Activated T-helper 2 cell treated with anti-CD3 and anti-CD28 coated beads, Interferon-gamma antibody, Interleukin-2, Interleukin-4, amounts not matched to agents 10 μg/mL and 5 μg/mL and 100 μg/mL, durations not matched to agents 14 hours and 24 hours and 36 hours (primary cell): ENCODE measurements at regions of chr2 and their contacts with region 1.

Region 1: DNA sequence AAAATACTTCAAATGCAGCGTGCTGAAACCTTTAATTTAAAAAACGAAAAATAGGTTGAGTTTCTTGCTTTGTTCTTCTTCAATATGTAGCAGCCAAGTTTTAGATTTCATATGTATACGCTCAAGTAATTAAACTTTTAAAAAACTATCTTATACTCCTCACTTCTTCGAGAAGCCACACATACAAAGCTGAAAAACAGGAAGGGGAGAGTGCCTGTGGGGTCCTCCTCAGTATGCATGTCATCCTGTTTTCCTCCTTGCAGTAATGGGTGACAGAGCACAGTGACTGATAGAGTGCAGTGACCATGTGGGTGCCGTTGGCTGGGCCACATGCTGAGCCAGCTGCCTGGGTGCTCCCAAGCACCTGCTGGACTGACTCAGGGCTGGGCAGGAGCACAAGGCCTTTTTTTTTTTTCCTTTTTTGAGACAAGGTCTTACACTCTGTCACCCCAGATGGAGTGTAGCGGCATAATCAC is 33.3 kb downstream of the UXS1 start:
- DNase-seq: peak; percentile 24
- H3K4me3 Mint-ChIP-seq: peak overlapping the region; percentile 81
- H3K27ac Mint-ChIP-seq: peak overlapping the region; percentile 92
- H3K4me1 Mint-ChIP-seq: peaks cover 64% of the 10 kb centered on the region
- H3K27me3 Mint-ChIP-seq: no peaks in the 10 kb centered on the region

Region 2: GRCh38 chr2:106124905-106125405 is 35.9 kb before region 1 on chr2:
- intact Hi-C with region 1: loop called (anchors 5 kb)
- DNase-seq: no peak
- H3K4me3 Mint-ChIP-seq: no peak overlapping the region
- H3K27ac Mint-ChIP-seq: no peak overlapping the region
- H3K4me1 Mint-ChIP-seq: peaks cover 25% of the 10 kb centered on the region
- H3K27me3 Mint-ChIP-seq: no peaks in the 10 kb centered on the region

Region 3: DNA sequence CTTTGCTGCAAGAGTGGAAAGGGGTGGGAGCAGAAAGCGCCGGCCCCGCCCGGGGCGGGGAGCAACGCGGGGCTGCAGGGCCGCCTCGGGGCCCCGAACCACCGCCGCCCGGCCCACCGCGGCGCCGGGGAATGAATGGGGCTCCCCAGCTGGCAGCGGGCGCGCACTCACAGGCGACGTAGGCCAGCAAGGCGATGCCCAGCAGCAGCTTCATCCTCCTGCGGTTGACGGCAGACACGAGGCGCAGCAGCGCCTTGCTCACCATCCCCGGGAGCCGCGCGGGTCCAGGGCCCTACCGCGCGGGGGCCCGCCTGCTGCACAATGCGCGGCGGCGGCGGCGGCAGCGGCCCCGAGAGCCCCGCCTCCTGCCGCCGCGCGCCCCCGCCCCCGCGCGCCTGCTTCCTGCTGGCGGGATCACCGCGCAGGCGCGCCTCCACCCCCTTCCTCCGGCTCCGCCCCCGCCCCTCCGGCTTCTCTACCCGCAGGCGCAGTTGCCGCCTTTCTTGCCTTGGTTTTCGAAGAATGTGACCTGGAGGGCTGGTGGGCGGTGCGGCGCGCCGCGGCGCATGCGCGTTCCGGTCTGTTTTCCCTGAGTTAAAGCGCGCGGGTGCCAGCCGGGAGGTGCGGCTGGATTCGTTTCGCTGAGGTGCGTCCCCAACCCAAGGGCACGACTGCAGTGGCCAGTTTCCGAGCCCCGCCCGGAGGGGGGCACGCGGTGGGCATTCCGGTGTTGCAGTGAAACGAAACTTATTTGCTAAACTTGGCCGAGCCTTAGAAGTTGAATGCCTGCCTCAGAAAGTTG is 33.4 kb after region 1 on chr2 and contains the start of gene UXS1:
- intact Hi-C with region 1: loop called (anchors 1 kb)
- DNase-seq: peak; percentile 97
- H3K4me3 Mint-ChIP-seq: peak within 1 kb of the TSS; percentile 85
- H3K27ac Mint-ChIP-seq: peak within 1 kb of the TSS; percentile 75
- H3K4me1 Mint-ChIP-seq: peaks cover 32% of the 10 kb centered on the region
- H3K27me3 Mint-ChIP-seq: peaks cover 18% of the 10 kb centered on the region
- total RNA-seq, gene UXS1: 29.7 and 34.9 TPM in 2 replicates